Motor neuron (in vitro differentiated cells): ENCODE measurements at regions of chr10 and their contacts with region 1.

Region 1: GRCh38 chr10:13787015-13787421 is 200.3 kb downstream of the PRPF18 start:
- ATAC-seq: no peak
- H3K4me3 ChIP-seq: no peak overlapping the region
- H3K27ac ChIP-seq: no peak overlapping the region
- H3K4me1 ChIP-seq: peaks cover 21 to 26% of the 10 kb centered on the region in 2 donors

Region 2: GRCh38 chr10:13457958-13458686 is 328.9 kb before region 1 on chr10:
- in situ Hi-C with region 1: no loop called
- ATAC-seq: peak; percentile 33 to 89 (median 83)
- H3K4me3 ChIP-seq: no peak overlapping the region
- H3K27ac ChIP-seq: no peak overlapping the region
- H3K4me1 ChIP-seq: peaks cover 0 to 13% of the 10 kb centered on the region in 2 donors

Region 3: GRCh38 chr10:13873196-13873595 is 86.2 kb after region 1 on chr10:
- in situ Hi-C with region 1: no loop called
- ATAC-seq: no peak
- H3K4me3 ChIP-seq: no peak overlapping the region
- H3K27ac ChIP-seq: no peak overlapping the region
- H3K4me1 ChIP-seq: peaks cover 11 to 20% of the 10 kb centered on the region in 2 donors

Region 4: DNA sequence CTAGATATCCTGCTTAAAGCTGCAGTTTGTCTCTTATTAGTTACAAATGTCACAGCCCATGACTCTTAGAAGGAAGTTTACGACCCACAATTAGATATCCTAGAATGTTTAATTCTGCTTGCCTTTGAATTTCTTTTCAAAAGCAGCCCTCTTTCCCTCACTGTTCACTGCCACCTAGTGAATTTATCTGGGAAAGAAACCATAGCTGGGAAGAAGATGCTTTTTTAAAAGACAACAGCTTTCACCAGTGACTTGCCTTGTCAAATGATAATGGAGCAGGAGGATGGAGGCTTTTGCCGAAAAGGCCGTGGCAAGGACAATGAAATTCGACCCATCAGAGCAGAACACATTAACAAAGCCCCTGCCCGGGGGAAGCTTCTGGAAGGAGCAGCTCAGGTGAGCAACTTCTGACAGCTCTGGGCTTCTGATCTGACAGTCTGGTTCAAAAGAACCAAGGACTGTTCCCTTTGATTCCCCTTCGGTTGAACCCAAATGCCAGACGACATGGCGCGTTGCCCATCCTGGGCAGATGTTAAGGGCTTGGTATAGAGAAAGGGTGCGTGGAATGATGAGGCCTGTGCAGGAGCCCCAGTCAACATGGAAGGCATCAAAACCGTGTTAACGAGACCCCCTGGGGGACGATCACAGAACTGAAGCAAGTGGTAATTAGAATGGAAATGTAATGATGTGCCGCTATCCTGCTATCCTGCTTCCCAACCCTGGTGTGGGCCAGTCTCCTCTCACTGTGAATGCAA is 306.9 kb after region 1 on chr10:
- in situ Hi-C with region 1: loop called in 3 of 9 experiments (anchors 10 to 25 kb)
- ATAC-seq: peak; percentile 38 to 74 (median 54)
- H3K4me3 ChIP-seq: no peak overlapping the region
- H3K27ac ChIP-seq: peak overlapping the region in 1 of 2 donors; percentile 45
- H3K4me1 ChIP-seq: peaks cover 29 to 30% of the 10 kb centered on the region in 2 donors

Region 5: DNA sequence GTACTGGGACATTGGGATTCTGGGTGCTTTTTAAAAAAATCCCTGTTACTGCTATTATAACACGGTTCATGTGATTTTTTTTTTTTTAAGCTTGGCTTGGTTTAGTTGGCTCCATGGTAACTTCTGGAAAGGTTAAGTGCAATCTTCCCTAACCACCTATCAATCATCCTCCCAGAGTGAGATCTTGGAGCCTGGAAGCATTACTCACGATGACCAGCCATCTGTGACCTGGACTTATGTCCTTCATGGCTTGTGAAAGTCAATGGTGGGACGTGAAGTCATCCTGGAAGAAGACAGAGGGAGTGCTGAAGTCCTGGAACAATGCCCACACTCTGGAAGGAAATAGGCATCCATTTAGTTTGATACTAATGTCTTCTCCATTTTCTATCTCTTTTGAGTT is 679.2 kb after region 1 on chr10:
- in situ Hi-C with region 1: loop called in 2 of 9 experiments (anchors 10 to 25 kb)
- ATAC-seq: peak in 2 of 8 experiments; percentile 9 to 12
- H3K4me3 ChIP-seq: no peak overlapping the region
- H3K27ac ChIP-seq: no peak overlapping the region
- H3K4me1 ChIP-seq: peaks cover 15 to 21% of the 10 kb centered on the region in 2 donors

Region 6: GRCh38 chr10:14478604-14479003 is 691.6 kb after region 1 on chr10:
- in situ Hi-C with region 1: loop called in 3 of 9 experiments (anchors 10 to 25 kb)
- ATAC-seq: peak; percentile 65 to 95 (median 80)
- H3K4me3 ChIP-seq: no peak overlapping the region
- H3K27ac ChIP-seq: no peak overlapping the region
- H3K4me1 ChIP-seq: peaks cover 6 to 14% of the 10 kb centered on the region in 2 donors